CD8-positive, alpha-beta T cell (primary cell): ENCODE measurements at regions of chr4 and their contacts with region 1.

Region 1: GRCh38 chr4:39285111-39285795 is 80.9 kb downstream of the RFC1 start:
- DNase-seq: no peak
- ATAC-seq: no peak
- H3K4me3 ChIP-seq: no peak overlapping the region
- H3K4me3 Mint-ChIP-seq: no peak overlapping the region
- H3K27ac ChIP-seq: no peak overlapping the region
- H3K27ac Mint-ChIP-seq: no peak overlapping the region
- H3K4me1 ChIP-seq: no peaks in the 10 kb centered on the region
- H3K4me1 Mint-ChIP-seq: no peaks in the 10 kb centered on the region
- H3K27me3 ChIP-seq: no peaks in the 10 kb centered on the region
- H3K27me3 Mint-ChIP-seq: no peaks in the 10 kb centered on the region
- CTCF ChIP-seq: no peak

Region 2: DNA sequence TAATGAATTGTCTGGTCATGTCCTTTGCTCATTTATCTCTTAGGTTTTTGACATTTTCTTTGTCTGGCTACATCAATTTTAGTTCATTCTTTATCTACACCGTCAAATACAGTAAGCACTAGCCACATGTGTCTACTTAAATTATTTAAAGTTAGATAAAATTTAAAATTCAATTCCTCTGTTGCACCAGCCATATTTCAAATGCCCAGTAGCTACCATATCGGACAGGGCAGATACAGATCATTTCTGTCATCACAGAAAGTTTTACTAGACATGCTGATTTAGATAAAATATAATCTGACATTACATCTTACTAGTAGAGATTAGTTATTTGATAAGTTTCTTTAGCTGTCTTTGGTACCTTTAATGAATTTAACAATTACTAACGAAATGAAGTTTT is 41.8 kb before region 1 on chr4:
- CTCF ChIA-PET with region 1: no interaction called
- POLR2A ChIA-PET with region 1: no interaction called
- intact Hi-C with region 1: loop called in 1 of 2 experiments (anchors 2 kb)
- DNase-seq: no peak
- ATAC-seq: no peak
- H3K4me3 ChIP-seq: no peak overlapping the region
- H3K4me3 Mint-ChIP-seq: no peak overlapping the region
- H3K27ac ChIP-seq: no peak overlapping the region
- H3K27ac Mint-ChIP-seq: no peak overlapping the region
- H3K4me1 ChIP-seq: no peaks in the 10 kb centered on the region
- H3K4me1 Mint-ChIP-seq: no peaks in the 10 kb centered on the region
- H3K27me3 ChIP-seq: no peaks in the 10 kb centered on the region
- H3K27me3 Mint-ChIP-seq: no peaks in the 10 kb centered on the region
- CTCF ChIP-seq: no peak